Panc1 (cell line): ENCODE measurements at regions of chr18 and their contacts with region 1.

Region 1: DNA sequence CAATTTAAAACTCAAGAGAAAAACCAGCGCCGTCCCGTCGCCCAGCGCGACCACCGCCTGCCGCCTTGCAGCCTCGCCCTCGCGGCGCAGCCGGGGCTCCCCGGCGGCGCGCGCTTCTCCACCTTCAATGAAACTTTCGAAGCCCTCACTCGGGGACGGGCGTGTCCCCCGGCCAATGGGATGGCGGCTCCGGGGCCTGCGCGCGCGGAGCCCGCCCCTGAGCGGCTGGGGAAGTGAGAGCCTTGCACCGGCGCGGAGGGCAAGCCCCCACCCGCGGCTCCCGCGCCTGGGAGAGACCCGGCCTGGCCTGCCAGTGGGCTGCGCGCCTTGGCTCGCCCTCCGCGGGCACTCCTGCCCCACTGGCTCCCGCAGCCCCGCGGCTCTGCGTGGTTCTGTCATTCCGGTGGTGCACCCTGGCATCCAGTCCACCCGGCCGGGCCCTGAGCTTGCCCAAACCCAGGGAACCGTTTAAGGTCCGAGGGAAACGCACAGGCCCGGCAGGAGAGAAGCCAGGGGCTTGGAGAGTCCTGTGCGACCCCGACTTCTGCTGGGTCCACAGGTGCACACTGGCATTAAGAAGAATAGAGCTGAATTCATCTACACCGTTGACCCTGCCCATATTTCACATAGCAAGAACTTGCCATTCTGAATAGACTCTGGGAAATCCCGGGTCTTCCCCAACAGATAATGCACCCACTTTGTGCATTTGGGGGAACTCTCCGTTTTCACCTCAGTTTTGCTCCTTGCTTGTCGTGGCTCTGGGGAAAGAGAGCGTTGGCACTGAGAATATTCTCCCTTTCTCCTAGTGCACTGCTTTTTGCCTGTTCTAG is at the start of gene PIEZO2:
- DNase-seq: no peak
- ATAC-seq: peak; percentile 75
- H3K4me3 ChIP-seq: no peak within 1 kb of the TSS
- H3K27ac ChIP-seq: no peak within 1 kb of the TSS
- H3K4me1 ChIP-seq: no peaks in the 10 kb centered on the region
- H3K27me3 ChIP-seq: peaks cover 5% of the 10 kb centered on the region; the same call in 1 of the 2 replicates
- CTCF ChIP-seq: no peak
- total RNA-seq, gene PIEZO2: 0.57 TPM

Region 2: DNA sequence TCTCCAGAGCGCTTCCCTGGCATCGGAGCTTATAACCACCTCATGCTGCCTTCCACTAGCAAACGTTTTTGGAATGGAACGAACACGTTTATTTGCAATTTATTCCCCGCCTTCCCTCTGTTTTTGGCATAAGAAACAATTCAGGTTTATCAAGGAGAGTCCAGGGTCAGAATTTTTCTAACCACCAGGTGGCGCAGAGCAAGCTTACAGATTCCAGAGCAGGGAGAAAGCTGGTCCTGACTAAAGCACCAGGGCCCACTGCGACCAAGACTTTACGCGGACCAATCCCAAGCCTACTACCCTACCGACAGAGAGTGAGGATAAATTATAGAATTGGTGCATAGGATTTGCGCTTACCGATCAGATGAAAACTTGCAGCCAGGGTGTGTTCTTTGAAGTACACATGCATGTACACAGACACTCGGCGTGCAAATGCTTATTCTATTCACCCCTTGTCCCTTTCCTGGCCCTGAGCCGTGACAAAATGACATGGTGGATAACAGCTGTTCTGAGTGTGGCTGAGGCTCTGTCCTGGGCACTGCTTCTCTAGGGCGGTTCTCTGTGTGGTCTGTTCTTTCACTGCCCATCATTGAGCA is 589.1 kb before region 1 on chr18:
- CTCF ChIA-PET with region 1: interaction called, 4 read pairs
- POLR2A ChIA-PET with region 1: no interaction called
- in situ Hi-C with region 1: no loop called
- intact Hi-C with region 1: loop called (anchors 10 kb)
- DNase-seq: peak; percentile 25
- ATAC-seq: peak; percentile 87
- H3K4me3 ChIP-seq: peak overlapping the region; percentile 7 to 27; a peak in 3 of 4 replicates
- H3K27ac ChIP-seq: no peak overlapping the region
- H3K4me1 ChIP-seq: no peaks in the 10 kb centered on the region
- H3K27me3 ChIP-seq: no peaks in the 10 kb centered on the region
- CTCF ChIP-seq: peak; percentile 85

Region 3: GRCh38 chr18:10851824-10852319 is 297.8 kb before region 1 on chr18:
- CTCF ChIA-PET with region 1: no interaction called
- POLR2A ChIA-PET with region 1: no interaction called
- in situ Hi-C with region 1: no loop called
- intact Hi-C with region 1: loop called (anchors 1 kb)
- DNase-seq: peak; percentile 12
- ATAC-seq: no peak
- H3K4me3 ChIP-seq: no peak overlapping the region
- H3K27ac ChIP-seq: no peak overlapping the region
- H3K4me1 ChIP-seq: no peaks in the 10 kb centered on the region
- H3K27me3 ChIP-seq: no peaks in the 10 kb centered on the region; the same call in 1 of the 2 replicates
- CTCF ChIP-seq: peak; percentile 73; the same call in 1 of the 2 replicates